Activated CD8-positive, alpha-beta T cell treated with anti-CD3 and anti-CD28 coated beads, Interleukin-2, amount 10 ng/mL, durations not matched to agents 7 days and 5 days (primary cell): ENCODE measurements at regions of chr1 and their contacts with region 1.

Region 1: GRCh38 chr1:184892116-184892515 is 82.2 kb downstream of the NIBAN1 start:
- DNase-seq: no peak
- ATAC-seq: peak; percentile 51
- H3K4me3 Mint-ChIP-seq: no peak overlapping the region
- H3K27ac Mint-ChIP-seq: no peak overlapping the region
- H3K4me1 Mint-ChIP-seq: peaks cover 30% of the 10 kb centered on the region
- H3K27me3 Mint-ChIP-seq: no peaks in the 10 kb centered on the region

Region 2: DNA sequence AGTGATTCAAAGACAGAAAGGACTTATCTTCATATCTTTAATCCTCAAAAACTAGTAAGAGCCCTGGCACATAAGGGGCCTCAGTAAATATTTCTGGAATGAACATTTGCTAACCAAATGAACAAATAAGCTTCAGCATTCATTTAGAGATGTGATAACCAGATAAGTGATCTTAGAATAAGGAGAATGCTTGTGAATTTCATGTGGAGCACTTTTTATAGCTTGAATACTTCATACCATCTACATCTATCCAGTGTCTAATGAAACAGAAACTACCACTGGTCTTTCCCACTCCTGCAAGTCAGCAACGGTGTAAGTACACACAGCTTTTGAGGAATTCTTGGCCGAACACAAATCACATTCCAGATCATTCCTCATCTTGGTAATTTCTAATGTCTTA is 176.0 kb before region 1 on chr1:
- CTCF ChIA-PET with region 1: no interaction called
- POLR2A ChIA-PET with region 1: no interaction called
- DNase-seq: no peak
- ATAC-seq: no peak
- H3K4me3 Mint-ChIP-seq: no peak overlapping the region
- H3K27ac Mint-ChIP-seq: no peak overlapping the region
- H3K4me1 Mint-ChIP-seq: no peaks in the 10 kb centered on the region
- H3K27me3 Mint-ChIP-seq: no peaks in the 10 kb centered on the region

Region 3: GRCh38 chr1:184866991-184867788 is 24.9 kb before region 1 on chr1:
- CTCF ChIA-PET with region 1: interaction called, 3 read pairs
- POLR2A ChIA-PET with region 1: interaction called, 11 read pairs
- DNase-seq: peak; percentile 81
- ATAC-seq: peak; percentile 86
- H3K4me3 Mint-ChIP-seq: peak overlapping the region; percentile 50
- H3K27ac Mint-ChIP-seq: peak overlapping the region; percentile 79
- H3K4me1 Mint-ChIP-seq: peaks cover 49% of the 10 kb centered on the region
- H3K27me3 Mint-ChIP-seq: no peaks in the 10 kb centered on the region